Gastrocnemius medialis (tissue), 4 donors: ENCODE measurements at regions of chr1 and their contacts with region 1.

Region 1: GRCh38 chr1:52927212-52928014 is at the start of gene SCP2:
- DNase-seq: peak; percentile 80 to 83
- ATAC-seq: peak; percentile 81 to 90
- H3K4me3 ChIP-seq: peak within 1 kb of the TSS; percentile 81 to 90 (median 88)
- H3K27ac ChIP-seq: peak within 1 kb of the TSS; percentile 91 to 94 (median 92)
- H3K4me1 ChIP-seq: peaks cover 9 to 23% of the 10 kb centered on the region in 2 donors
- H3K27me3 ChIP-seq: no peaks in the 10 kb centered on the region
- CTCF ChIP-seq: no peak
- POLR2A ChIP-seq: peak; percentile 83 to 84
- total RNA-seq, gene SCP2: 44.6 to 75.4 (median 61.1) TPM

Region 2: DNA sequence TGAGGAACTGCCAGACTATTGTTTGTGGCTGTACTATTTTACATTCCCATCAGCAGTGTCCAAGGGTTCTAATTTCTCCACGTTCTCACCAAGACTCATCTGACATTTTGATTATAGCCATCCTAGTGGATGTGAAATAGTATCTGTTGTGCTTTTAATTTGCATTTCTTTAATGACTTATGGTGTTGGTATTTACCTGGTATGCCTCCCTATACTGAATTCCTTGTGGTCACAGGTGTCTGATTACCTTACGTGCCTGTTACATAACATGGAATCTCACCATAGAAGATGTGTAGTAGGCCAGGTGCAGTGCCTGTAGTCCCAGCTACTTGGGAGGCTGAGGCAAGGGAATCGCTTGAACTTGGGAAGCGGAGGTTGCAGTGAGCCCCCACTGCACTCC is 71.4 kb before region 1 on chr1:
- in situ Hi-C with region 1: no loop called
- intact Hi-C with region 1: loop called (anchors 2 kb)
- DNase-seq: no peak
- ATAC-seq: no peak
- H3K4me3 ChIP-seq: no peak overlapping the region
- H3K27ac ChIP-seq: no peak overlapping the region
- H3K4me1 ChIP-seq: peaks cover 0 to 13% of the 10 kb centered on the region in 2 donors
- H3K27me3 ChIP-seq: no peaks in the 10 kb centered on the region
- CTCF ChIP-seq: no peak
- POLR2A ChIP-seq: no peak